ENCODE measurements at regions of chr17 and their contacts with region 1.

Region 1: GRCh38 chr17:31475378-31476162 is 84.1 kb downstream of the RAB11FIP4 start:
- DNase-seq: no peak
- H3K4me3 ChIP-seq: no peak overlapping the region
- CTCF ChIP-seq: no peak

Region 2: DNA sequence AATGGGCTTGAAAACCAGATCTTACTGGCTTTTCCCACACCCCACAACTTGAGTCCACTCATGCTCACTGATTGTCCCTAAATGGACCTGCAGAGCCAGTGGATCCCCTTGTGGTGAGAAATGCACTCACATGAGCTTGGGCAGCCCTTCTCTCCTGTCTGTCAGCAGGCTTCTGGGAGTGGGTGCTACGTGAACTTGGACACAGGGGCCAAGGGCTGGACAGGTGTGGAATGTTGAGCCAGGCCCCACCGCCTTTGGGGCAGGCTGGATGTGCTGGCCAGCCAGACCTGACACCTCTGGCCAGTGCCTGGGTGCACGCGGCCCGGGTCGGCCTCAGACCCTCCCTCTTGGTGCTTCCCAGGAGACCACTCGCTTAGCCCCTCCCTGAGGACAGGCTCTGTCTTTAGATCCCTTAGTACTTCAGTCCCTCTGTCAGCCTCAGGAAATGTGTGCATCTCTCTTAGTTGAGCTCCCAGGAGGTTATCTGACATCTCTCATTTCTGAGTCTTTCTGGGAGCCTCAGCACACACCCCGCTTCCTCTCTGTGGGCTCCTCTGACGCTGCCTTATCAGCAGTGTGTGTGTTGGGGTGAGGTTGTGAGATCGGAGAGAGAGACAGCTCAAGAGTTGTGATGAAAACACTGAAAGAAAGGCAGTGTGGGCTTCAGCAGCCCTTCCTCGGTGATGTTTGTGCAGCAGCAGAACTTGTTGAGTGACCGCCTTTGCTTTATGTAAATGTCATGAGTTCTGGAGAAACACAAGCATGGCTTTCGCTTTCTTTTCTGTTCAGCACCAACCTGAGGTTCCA is 32.9 kb after region 1 on chr17:
- in situ Hi-C with region 1: no loop called
- DNase-seq: no peak
- H3K4me3 ChIP-seq: no peak overlapping the region
- CTCF ChIP-seq: peak; percentile 22

Region 3: GRCh38 chr17:31535581-31535981 is 60.0 kb after region 1 on chr17:
- in situ Hi-C with region 1: loop called (anchors 5 kb)
- DNase-seq: no peak
- H3K4me3 ChIP-seq: no peak overlapping the region
- CTCF ChIP-seq: no peak

Region 4: DNA sequence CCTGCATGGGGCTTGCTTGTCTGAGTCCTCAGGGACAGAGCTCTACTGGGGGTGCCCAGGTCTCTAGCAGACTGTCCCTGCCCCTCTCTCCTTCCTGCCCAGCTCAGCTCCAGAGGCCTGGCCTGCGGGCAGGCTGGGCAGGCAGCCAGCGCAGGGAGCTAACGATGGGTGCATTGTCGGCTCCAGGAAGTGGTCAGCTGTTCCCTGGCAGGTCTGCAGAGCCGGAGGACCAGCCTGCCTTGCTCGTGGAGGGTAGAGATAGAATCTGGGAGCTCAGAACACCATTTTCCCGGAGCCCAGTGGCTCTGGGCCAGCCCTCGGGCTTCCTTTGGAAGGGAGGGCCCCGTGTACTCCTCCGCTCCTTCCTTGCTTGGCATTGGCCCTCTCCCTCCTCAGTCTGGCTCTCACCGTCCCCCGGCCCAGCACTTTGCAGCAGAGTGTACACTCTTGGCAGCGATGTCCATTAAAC is 105.5 kb after region 1 on chr17:
- in situ Hi-C with region 1: no loop called
- DNase-seq: peak; percentile 79
- H3K4me3 ChIP-seq: no peak overlapping the region
- CTCF ChIP-seq: no peak

Measured in astrocyte of the cerebellum (primary cell).